ENCODE measurements at regions of chr21 and their contacts with region 1.

Region 1: GRCh38 chr21:42220138-42220701 is 1.3 kb downstream of the ABCG1 start:
- DNase-seq: no peak
- ATAC-seq: peak; percentile 81
- H3K4me3 ChIP-seq: peak overlapping the region; percentile 71
- H3K27ac ChIP-seq: no peak overlapping the region
- H3K4me1 ChIP-seq: peaks cover 9% of the 10 kb centered on the region; the same call in 1 of the 2 replicates
- H3K27me3 ChIP-seq: peaks cover 0 to 4% of the 10 kb centered on the region in 2 experiments; a peak in 1 of 4 replicates
- CTCF ChIP-seq: no peak
- EP300 ChIP-seq: no peak
- POLR2A ChIP-seq: no peak
- RAD21 ChIP-seq: no peak

Region 2: GRCh38 chr21:42171091-42172053 is 48.8 kb before region 1 on chr21:
- CTCF ChIA-PET with region 1: interaction called, 3 read pairs
- POLR2A ChIA-PET with region 1: interaction called, 3 read pairs
- RAD21 ChIA-PET with region 1: interaction called, 10 read pairs
- SMC1A ChIA-PET with region 1: interaction called, 4 read pairs
- in situ Hi-C with region 1: no loop called
- intact Hi-C with region 1: no loop called
- DNase-seq: no peak
- ATAC-seq: 0 out of 3 replicates have a peak, but pooled peaks have one; percentile 31
- H3K4me3 ChIP-seq: no peak overlapping the region
- H3K27ac ChIP-seq: no peak overlapping the region
- H3K4me1 ChIP-seq: no peaks in the 10 kb centered on the region
- H3K27me3 ChIP-seq: 0 out of 4 replicates have a peak, but pooled peaks cover 0 to 2% of the 10 kb centered on the region in 2 experiments
- CTCF ChIP-seq: no peak
- EP300 ChIP-seq: no peak
- POLR2A ChIP-seq: no peak
- RAD21 ChIP-seq: no peak

Region 3: DNA sequence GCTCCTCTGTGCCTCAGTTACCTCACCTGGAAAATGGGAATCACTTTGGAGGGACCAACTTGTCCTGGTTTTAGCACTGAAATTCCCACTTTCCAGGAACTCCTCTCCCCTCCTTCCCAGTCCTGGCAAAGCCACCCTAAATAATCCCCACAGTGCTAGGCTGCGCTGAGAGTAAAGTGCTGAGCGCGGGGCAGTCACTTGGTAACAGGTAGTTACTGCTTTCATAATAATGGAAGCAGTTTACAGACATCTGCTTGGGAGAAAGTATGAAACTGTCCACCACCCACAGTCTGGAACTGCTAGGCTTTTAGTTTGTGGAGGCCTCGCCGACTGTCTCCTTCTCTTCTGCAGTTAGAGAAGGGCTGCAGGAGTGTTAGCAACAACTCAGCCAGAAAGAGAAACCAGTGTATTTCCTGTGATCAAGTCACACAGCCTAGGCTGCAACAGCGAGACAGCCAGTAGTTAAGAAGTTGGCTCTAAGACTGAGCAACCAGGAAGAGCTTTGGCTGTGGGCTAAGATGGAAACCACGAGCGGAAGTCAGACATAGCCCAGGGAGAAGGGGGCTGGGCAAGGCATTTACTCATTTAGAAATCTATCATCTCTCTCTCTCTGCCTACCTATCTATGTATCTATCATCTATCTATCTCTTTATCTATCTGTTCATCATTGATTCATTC is 32.1 kb before region 1 on chr21:
- CTCF ChIA-PET with region 1: interaction called, 7 read pairs
- POLR2A ChIA-PET with region 1: interaction called, 14 read pairs
- RAD21 ChIA-PET with region 1: interaction called, 18 read pairs
- SMC1A ChIA-PET with region 1: interaction called, 11 read pairs
- in situ Hi-C with region 1: no loop called
- intact Hi-C with region 1: no loop called
- DNase-seq: peak; percentile 92
- ATAC-seq: peak; percentile 99
- H3K4me3 ChIP-seq: peak overlapping the region; percentile 29; the same call in 1 of the 2 replicates
- H3K27ac ChIP-seq: peak overlapping the region; percentile 92
- H3K4me1 ChIP-seq: peaks cover 19% of the 10 kb centered on the region
- H3K27me3 ChIP-seq: no peaks in the 10 kb centered on the region
- CTCF ChIP-seq: no peak
- EP300 ChIP-seq: no peak; a peak in 1 of 4 replicates
- POLR2A ChIP-seq: peak; percentile 72
- RAD21 ChIP-seq: no peak

Region 4: DNA sequence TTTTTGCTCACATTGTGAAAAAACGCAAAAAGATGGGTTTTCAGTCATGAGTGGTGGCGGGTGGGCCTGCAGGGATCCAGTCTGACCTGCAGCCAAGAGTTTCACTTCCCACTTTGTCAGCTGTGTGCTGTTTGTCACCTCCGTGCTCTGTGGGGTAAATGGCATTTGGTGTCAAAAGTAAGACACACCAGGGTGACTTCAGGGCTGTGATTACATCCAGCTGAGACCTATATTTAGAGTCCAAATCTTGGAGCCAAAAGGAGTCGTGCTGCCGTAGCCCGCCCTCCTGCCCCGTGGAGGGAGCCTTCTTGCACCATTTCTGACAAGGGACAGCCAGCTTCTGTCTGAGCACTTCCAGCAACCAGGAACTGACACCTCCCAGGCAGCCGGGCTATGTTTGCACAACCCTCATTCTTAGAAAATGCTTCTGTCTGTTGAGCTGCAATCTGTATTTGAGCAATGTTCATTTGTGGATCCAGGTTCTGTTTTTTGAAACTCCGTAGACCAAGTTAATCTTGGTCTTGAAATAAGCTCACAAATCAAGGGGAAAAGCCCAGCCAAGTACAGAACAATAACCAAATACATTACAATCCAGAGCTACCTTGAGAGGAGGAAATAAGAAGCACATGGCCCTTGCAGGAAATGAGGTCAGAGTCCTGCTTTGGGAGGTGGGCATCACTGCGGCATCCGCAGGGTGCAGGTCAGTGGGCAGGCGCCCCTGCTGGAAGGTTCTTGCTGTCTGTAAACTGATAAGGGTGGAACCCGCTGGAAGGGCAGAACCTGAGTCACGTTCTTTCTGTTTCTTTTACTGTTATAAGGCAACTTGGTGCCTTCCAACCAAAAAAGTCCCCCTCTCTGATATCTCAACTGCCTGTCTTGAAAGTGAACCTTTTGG is 13.1 kb after region 1 on chr21:
- CTCF ChIA-PET with region 1: interaction called, 30 read pairs
- POLR2A ChIA-PET with region 1: interaction called, 38 read pairs
- RAD21 ChIA-PET with region 1: interaction called, 48 read pairs
- SMC1A ChIA-PET with region 1: interaction called, 77 read pairs
- in situ Hi-C with region 1: no loop called
- intact Hi-C with region 1: no loop called
- DNase-seq: peak; percentile 82
- ATAC-seq: peak; percentile 71
- H3K4me3 ChIP-seq: no peak overlapping the region; the same call in 1 of the 2 replicates
- H3K27ac ChIP-seq: peak overlapping the region; percentile 84
- H3K4me1 ChIP-seq: peaks cover 69% of the 10 kb centered on the region
- H3K27me3 ChIP-seq: no peaks in the 10 kb centered on the region
- CTCF ChIP-seq: peak; percentile 37 to 47 (median 43); a peak in 4 of 6 replicates
- EP300 ChIP-seq: peak; percentile 91 to 98
- POLR2A ChIP-seq: no peak
- RAD21 ChIP-seq: 0 out of 2 replicates have a peak, but pooled peaks have one; percentile 7

Region 5: DNA sequence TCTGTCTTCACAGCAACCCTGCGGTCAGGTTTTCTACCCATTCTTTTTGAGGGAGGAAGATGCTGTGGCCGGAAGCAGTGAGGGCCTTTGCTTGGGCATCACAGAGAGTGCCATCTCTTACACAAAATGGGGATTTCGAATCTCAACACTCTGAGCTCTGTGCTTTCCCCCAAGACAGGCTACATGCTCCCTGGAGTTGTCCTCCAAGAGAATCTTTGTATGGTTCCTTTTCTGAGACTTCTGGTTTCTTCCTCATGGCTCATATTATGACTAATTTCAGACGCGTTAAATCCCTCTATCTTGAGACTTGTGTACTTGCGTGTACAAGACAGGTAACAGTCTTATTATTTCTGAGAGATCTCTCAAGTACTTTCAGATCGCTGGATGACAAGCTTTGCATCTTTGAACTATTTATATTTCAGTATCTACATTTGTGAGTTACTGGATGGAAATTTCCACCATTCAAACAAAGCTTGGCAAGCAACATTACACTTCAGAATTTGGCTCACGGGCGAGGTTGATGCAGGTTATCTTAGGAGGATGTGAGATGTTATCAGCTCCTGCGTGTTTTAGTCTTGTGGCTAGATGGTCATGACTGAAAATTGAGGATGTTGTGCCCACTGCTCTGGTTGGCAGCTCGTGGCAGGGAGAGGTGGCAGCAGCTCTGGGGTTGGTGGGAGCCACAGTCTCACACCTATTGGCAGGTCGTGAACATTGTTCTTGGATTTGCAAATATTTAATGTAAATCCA is 18.1 kb after region 1 on chr21:
- CTCF ChIA-PET with region 1: interaction called, 30 read pairs
- POLR2A ChIA-PET with region 1: interaction called, 38 read pairs
- RAD21 ChIA-PET with region 1: interaction called, 48 read pairs
- SMC1A ChIA-PET with region 1: interaction called, 77 read pairs
- in situ Hi-C with region 1: no loop called
- intact Hi-C with region 1: no loop called
- DNase-seq: peak; percentile 57
- ATAC-seq: peak; percentile 39
- H3K4me3 ChIP-seq: no peak overlapping the region
- H3K27ac ChIP-seq: peak overlapping the region; percentile 22
- H3K4me1 ChIP-seq: peaks cover 65% of the 10 kb centered on the region
- H3K27me3 ChIP-seq: no peaks in the 10 kb centered on the region
- CTCF ChIP-seq: no peak
- EP300 ChIP-seq: peak; percentile 25 to 39; a peak in 1 of 4 replicates
- POLR2A ChIP-seq: no peak
- RAD21 ChIP-seq: no peak

Region 6: GRCh38 chr21:42248783-42249597 is 28.8 kb after region 1 on chr21:
- CTCF ChIA-PET with region 1: interaction called, 8 read pairs
- POLR2A ChIA-PET with region 1: interaction called, 6 read pairs
- RAD21 ChIA-PET with region 1: interaction called, 15 read pairs
- SMC1A ChIA-PET with region 1: interaction called, 8 read pairs
- in situ Hi-C with region 1: no loop called
- intact Hi-C with region 1: no loop called
- DNase-seq: peak; percentile 76
- ATAC-seq: peak; percentile 99
- H3K4me3 ChIP-seq: peak overlapping the region; percentile 1; the same call in 1 of the 2 replicates
- H3K27ac ChIP-seq: peak overlapping the region; percentile 9; the same call in 1 of the 2 replicates
- H3K4me1 ChIP-seq: peaks cover 15% of the 10 kb centered on the region
- H3K27me3 ChIP-seq: no peaks in the 10 kb centered on the region
- CTCF ChIP-seq: no peak
- EP300 ChIP-seq: peak; percentile 44 to 86; a peak in 3 of 4 replicates
- POLR2A ChIP-seq: no peak
- RAD21 ChIP-seq: 0 out of 2 replicates have a peak, but pooled peaks have one; percentile 7

Region 7: DNA sequence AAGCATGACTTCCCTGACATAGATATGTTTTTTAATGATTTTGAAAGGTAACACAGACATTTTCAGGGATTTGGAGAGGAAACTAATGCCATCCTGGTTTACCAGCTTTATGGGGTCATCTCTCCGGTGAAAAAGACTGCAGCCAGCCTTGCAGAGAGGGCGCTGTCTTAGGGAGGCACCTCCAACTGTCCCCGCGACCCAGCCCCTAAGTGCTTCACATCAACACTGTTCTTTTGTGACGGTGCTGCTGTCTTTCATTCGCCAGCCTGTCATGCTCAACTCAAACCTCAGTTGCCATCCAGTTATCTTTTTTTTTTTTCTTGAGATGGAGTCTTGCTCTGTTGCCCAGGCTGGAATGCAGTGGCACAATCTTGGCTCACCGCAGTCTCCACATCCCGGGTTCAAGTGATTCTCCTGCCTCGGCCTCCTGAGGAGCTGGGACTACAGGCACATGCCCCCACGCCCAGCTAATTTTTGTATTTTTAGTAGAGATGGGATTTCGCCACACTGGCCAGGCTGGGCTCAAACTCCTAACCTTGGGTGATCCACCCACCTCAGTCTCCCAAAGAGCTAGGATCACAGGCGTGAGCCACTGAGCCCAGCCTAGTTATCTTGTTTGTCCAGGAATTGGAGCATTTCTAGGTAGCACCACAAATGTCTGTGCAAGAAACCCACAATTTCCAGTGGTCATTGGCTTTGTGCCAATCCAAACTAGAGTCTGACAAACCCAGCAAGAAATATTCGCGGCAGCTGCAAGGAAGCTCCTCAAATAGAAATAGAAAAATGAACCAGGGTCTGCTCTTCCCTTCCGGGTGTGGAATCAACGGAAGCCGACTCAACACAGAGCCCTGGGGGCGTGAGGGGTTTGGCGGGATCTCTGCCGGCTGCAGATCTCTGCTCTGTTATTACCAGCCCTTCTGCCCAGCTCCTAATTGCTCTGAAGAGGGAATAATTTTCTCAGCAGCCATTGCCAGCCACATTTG is 457.4 kb after region 1 on chr21:
- CTCF ChIA-PET with region 1: no interaction called
- POLR2A ChIA-PET with region 1: no interaction called
- RAD21 ChIA-PET with region 1: no interaction called
- SMC1A ChIA-PET with region 1: no interaction called
- in situ Hi-C with region 1: no loop called
- intact Hi-C with region 1: no loop called
- DNase-seq: no peak
- ATAC-seq: no peak
- H3K4me3 ChIP-seq: no peak overlapping the region
- H3K27ac ChIP-seq: no peak overlapping the region
- H3K4me1 ChIP-seq: no peaks in the 10 kb centered on the region
- H3K27me3 ChIP-seq: peaks cover 0 to 4% of the 10 kb centered on the region in 2 experiments; a peak in 2 of 4 replicates
- CTCF ChIP-seq: no peak
- EP300 ChIP-seq: no peak
- POLR2A ChIP-seq: no peak
- RAD21 ChIP-seq: no peak

Region 8: GRCh38 chr21:43697758-43698643 is 1477.8 kb after region 1 on chr21:
- CTCF ChIA-PET with region 1: no interaction called
- POLR2A ChIA-PET with region 1: no interaction called
- RAD21 ChIA-PET with region 1: no interaction called
- SMC1A ChIA-PET with region 1: no interaction called
- in situ Hi-C with region 1: loop called (anchors 25 kb)
- intact Hi-C with region 1: no loop called
- DNase-seq: no peak
- ATAC-seq: no peak
- H3K4me3 ChIP-seq: no peak overlapping the region
- H3K27ac ChIP-seq: no peak overlapping the region
- H3K4me1 ChIP-seq: peaks cover 6% of the 10 kb centered on the region
- H3K27me3 ChIP-seq: no peaks in the 10 kb centered on the region
- CTCF ChIP-seq: no peak
- EP300 ChIP-seq: no peak
- POLR2A ChIP-seq: no peak
- RAD21 ChIP-seq: no peak